ENCODE measurements at regions of chr19 and their contacts with region 1.

Region 1: DNA sequence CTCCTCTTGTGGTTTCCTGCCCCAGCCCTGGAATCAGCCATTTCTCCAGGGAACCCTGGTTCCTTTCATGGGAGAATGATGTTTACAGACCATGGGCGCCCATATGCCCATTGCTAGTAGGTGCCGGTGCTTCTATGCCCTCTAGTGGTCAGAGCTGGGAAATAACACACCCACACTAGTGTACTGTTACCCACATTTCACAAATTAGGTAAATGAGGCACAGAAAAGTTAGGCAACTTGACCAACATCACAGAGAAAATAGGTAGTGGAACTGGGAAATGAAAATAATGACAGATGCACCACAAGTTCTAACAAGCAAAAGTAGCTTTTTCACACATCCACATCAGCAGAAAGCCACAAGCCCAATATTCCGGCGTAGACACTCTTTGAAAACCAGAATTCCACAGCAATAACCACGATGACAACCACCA is 1.3 kb upstream of the CEACAM3 start:
- DNase-seq: peak; percentile 74
- ATAC-seq: peak; percentile 92
- H3K4me3 ChIP-seq: no peak overlapping the region
- H3K4me3 Mint-ChIP-seq: no peak overlapping the region
- H3K27ac ChIP-seq: no peak overlapping the region
- H3K27ac Mint-ChIP-seq: peak overlapping the region; percentile 2
- H3K4me1 ChIP-seq: peaks cover 0 to 2% of the 10 kb centered on the region in 2 donors
- H3K4me1 Mint-ChIP-seq: peaks cover 6% of the 10 kb centered on the region
- H3K27me3 ChIP-seq: peaks cover 0 to 8% (median 3%) of the 10 kb centered on the region in 4 experiments
- H3K27me3 Mint-ChIP-seq: peaks cover 25% of the 10 kb centered on the region
- CTCF ChIP-seq: peak; percentile 91

Region 2: GRCh38 chr19:41811036-41811435 is 16.0 kb after region 1 on chr19:
- CTCF ChIA-PET with region 1: interaction called, 63 read pairs
- POLR2A ChIA-PET with region 1: no interaction called
- intact Hi-C with region 1: no loop called
- DNase-seq: peak; percentile 66
- ATAC-seq: peak; percentile 10
- H3K4me3 ChIP-seq: no peak overlapping the region
- H3K4me3 Mint-ChIP-seq: no peak overlapping the region
- H3K27ac ChIP-seq: no peak overlapping the region
- H3K27ac Mint-ChIP-seq: peak overlapping the region; percentile 20
- H3K4me1 ChIP-seq: peaks cover 10 to 25% of the 10 kb centered on the region in 2 donors
- H3K4me1 Mint-ChIP-seq: peaks cover 20% of the 10 kb centered on the region
- H3K27me3 ChIP-seq: no peaks in the 10 kb centered on the region
- H3K27me3 Mint-ChIP-seq: no peaks in the 10 kb centered on the region
- CTCF ChIP-seq: no peak

Region 3: DNA sequence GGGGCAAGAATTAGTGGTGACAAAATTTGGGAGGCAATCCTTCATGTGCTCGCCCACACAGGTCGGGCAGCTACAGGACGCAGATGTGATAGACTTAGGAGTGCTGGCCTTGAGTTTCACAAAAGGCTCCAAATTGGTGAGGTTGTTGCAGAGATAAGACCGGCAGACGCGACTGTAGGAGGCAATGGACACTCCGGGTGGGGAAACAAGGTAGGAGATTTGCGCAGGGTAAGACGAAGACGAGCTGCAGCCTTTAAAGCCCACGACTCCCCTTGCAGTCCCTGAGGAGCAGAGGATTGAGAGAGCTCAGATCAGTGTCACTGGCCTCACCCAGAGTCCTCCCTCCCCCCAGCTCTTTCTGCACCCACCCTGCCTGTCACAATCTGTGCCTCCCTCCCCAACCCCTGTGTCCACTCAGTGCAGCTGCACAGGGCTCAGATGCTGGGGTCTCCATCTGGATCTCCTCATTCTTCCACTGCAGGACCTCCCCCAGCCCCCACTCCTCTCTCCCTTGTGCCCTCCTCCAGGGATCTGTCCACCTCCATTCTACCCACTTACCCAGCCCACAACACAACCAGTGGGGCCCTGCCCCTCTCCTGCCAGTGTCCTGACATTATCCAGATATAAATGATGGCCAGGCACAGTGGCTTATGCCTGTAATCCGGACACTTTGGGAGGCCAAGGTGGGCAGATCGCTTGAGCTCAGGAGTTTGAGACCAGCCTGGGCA is 43.1 kb after region 1 on chr19:
- CTCF ChIA-PET with region 1: interaction called, 35 read pairs
- POLR2A ChIA-PET with region 1: no interaction called
- intact Hi-C with region 1: no loop called
- DNase-seq: no peak
- ATAC-seq: no peak
- H3K4me3 ChIP-seq: no peak overlapping the region
- H3K4me3 Mint-ChIP-seq: no peak overlapping the region
- H3K27ac ChIP-seq: no peak overlapping the region
- H3K27ac Mint-ChIP-seq: no peak overlapping the region
- H3K4me1 ChIP-seq: no peaks in the 10 kb centered on the region
- H3K4me1 Mint-ChIP-seq: no peaks in the 10 kb centered on the region
- H3K27me3 ChIP-seq: peaks cover 0 to 30% (median 10%) of the 10 kb centered on the region in 4 experiments
- H3K27me3 Mint-ChIP-seq: peaks cover 33% of the 10 kb centered on the region
- CTCF ChIP-seq: no peak